Activated CD4-positive, alpha-beta T cell treated with anti-CD3 and anti-CD28 coated beads for 36 hours (primary cell): ENCODE measurements at regions of chr22 and their contacts with region 1.

Region 1: GRCh38 chr22:26672590-26673468 is 15.4 kb downstream of the MIAT start:
- DNase-seq: peak; percentile 96
- ATAC-seq: peak; percentile 71
- H3K4me3 Mint-ChIP-seq: peak overlapping the region; percentile 92
- H3K27ac Mint-ChIP-seq: peak overlapping the region; percentile 96
- H3K4me1 Mint-ChIP-seq: peaks cover 67% of the 10 kb centered on the region
- H3K27me3 Mint-ChIP-seq: no peaks in the 10 kb centered on the region

Region 2: GRCh38 chr22:25067851-25068421 is 1604.9 kb before region 1 on chr22:
- CTCF ChIA-PET with region 1: no interaction called
- POLR2A ChIA-PET with region 1: no interaction called
- intact Hi-C with region 1: loop called in 1 of 2 experiments (anchors 5 kb)
- DNase-seq: peak; percentile 90
- ATAC-seq: peak; percentile 74
- H3K4me3 Mint-ChIP-seq: peak overlapping the region; percentile 78
- H3K27ac Mint-ChIP-seq: peak overlapping the region; percentile 93
- H3K4me1 Mint-ChIP-seq: peaks cover 88% of the 10 kb centered on the region
- H3K27me3 Mint-ChIP-seq: no peaks in the 10 kb centered on the region

Region 3: DNA sequence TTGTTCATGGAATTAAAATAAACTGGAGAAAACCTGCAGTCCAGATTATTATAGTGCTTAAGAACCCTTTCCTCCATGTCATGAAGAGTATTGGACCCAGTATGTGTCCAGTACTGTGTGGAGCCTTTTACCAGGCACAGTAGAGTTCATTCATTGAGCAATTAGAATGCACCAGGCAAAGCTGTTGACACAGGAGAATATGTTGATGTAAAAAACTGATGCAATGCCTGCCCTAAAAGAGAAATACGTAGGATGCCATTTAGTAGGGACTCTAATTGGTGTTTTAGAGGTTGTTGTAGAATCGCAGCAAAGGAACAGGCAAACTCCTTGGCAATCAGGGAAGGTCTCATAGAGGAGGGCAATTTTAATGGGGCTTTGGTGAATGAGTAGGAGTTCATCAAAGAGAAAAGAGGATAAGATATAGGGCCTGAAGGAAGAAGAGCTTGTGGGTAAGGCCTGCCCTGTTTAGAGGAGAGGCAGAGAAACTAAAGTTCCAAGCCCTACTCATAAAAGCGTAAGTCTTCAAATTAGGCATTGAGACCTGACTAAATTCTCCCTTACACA is 377.2 kb before region 1 on chr22:
- CTCF ChIA-PET with region 1: no interaction called
- POLR2A ChIA-PET with region 1: no interaction called
- intact Hi-C with region 1: loop called in 1 of 2 experiments (anchors 5 kb)
- DNase-seq: no peak
- ATAC-seq: no peak
- H3K4me3 Mint-ChIP-seq: no peak overlapping the region
- H3K27ac Mint-ChIP-seq: peak overlapping the region; percentile 82
- H3K4me1 Mint-ChIP-seq: peaks cover 15% of the 10 kb centered on the region
- H3K27me3 Mint-ChIP-seq: no peaks in the 10 kb centered on the region

Region 4: GRCh38 chr22:26483439-26484359 is 189.1 kb before region 1 on chr22 and contains the starts of genes HPS4 and SRRD:
- CTCF ChIA-PET with region 1: interaction called, 5 read pairs
- POLR2A ChIA-PET with region 1: interaction called, 3 read pairs
- intact Hi-C with region 1: loop called (anchors 1 to 2 kb)
- DNase-seq: peak; percentile 95
- ATAC-seq: peak; percentile 75
- H3K4me3 Mint-ChIP-seq: peak within 1 kb of the TSS; percentile 82
- H3K27ac Mint-ChIP-seq: peak within 1 kb of the TSS; percentile 95
- H3K4me1 Mint-ChIP-seq: peaks cover 66% of the 10 kb centered on the region
- H3K27me3 Mint-ChIP-seq: no peaks in the 10 kb centered on the region
- total RNA-seq, gene HPS4: 49.3 to 60.9 TPM
- total RNA-seq, gene SRRD: 17.5 to 28.5 TPM

Region 5: DNA sequence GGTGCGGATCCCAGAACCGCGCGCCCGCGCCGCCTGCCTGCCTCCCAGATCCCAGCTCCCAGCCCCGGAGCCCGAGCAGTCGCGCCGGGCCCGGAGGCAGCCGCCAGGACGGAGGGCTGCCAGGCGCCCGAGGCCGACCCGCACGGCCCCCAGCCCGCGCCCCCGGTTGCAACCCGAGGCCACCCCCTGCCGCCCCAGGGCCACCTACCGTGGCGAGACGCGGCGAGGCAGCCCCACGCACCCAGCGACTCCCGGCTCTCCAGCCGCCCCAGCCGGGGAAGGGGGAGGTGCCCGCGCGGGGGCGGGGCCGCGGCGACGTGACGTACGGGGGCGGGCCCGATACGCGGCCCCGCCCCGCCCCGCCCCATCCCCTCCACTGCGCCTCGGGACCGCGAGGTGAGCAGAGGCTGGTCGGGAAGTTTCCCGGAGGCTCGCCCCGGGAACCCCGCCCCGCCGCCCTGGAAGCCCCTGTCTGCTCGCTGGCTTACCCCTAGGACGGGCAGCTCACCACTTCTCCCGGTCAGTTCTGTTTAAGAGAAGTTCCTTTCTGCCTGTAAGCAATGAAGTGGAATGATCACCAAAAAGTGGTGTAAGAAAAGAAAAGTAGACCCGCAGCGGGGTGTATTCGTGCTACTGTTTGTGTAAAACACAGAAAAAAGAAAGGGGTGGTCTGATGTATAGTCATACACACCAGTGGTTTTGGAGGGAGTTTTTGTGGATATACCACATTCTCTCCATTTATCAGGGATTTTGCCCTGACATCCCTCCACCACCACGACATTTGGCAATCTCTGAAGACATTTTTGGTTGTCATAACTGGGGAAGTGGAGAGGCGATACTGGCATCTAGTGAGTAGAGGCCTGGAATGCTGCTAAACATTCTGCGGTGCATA is 82.7 kb before region 1 on chr22 and contains the start of gene TPST2:
- CTCF ChIA-PET with region 1: interaction called, 3 read pairs
- POLR2A ChIA-PET with region 1: no interaction called
- intact Hi-C with region 1: loop called in 1 of 2 experiments (anchors 1 kb)
- DNase-seq: peak; percentile 87
- ATAC-seq: peak; percentile 84
- H3K4me3 Mint-ChIP-seq: peak within 1 kb of the TSS; percentile 90
- H3K27ac Mint-ChIP-seq: peak within 1 kb of the TSS; percentile 86
- H3K4me1 Mint-ChIP-seq: peaks cover 47% of the 10 kb centered on the region
- H3K27me3 Mint-ChIP-seq: no peaks in the 10 kb centered on the region
- total RNA-seq, gene TPST2: 17.4 to 18.3 TPM

Region 6: DNA sequence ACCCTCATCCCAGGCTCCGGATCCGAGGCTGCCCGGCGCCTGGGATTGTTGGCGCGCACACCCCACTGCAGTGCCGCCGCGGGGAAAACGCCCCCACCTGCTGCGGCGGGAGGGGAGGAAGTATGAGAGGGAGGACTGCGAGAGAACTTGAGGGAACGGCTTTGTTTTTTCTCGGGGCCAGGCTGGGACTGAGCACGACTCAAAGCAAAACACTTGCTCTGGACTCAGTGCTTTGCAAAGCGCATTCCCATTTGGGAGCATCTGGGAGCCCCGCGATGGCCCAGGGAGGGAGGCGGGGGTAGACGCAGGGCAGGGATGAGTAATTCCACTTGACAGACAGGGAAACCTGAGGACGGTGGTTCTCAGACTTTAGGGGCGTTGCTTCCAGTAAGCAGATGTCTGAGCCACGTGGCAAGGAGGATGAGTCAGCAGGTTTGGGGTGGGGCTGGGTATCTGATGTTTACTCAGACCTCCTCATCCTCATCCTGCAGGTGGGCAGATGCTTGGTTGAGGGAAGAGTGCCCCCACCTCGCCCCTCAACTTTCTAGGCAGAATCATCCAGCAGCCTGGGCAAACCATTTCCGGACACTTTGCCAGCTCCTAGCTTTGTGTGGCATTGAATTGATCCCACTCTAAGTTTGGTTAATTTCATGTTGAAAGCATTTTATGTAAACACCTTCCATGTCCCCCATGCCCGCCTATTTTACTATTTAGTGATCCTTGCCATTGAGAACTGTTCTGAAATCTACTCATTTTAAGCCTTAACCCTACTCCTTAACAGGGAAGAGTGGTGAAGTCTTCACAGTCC is 14.0 kb before region 1 on chr22:
- CTCF ChIA-PET with region 1: interaction called, 5 read pairs
- POLR2A ChIA-PET with region 1: interaction called, 3 read pairs
- intact Hi-C with region 1: loop called (anchors 1 kb)
- DNase-seq: peak; percentile 92
- ATAC-seq: peak; percentile 88
- H3K4me3 Mint-ChIP-seq: peak overlapping the region; percentile 81
- H3K27ac Mint-ChIP-seq: peak overlapping the region; percentile 82
- H3K4me1 Mint-ChIP-seq: peaks cover 23% of the 10 kb centered on the region
- H3K27me3 Mint-ChIP-seq: peaks cover 8% of the 10 kb centered on the region

Region 7: DNA sequence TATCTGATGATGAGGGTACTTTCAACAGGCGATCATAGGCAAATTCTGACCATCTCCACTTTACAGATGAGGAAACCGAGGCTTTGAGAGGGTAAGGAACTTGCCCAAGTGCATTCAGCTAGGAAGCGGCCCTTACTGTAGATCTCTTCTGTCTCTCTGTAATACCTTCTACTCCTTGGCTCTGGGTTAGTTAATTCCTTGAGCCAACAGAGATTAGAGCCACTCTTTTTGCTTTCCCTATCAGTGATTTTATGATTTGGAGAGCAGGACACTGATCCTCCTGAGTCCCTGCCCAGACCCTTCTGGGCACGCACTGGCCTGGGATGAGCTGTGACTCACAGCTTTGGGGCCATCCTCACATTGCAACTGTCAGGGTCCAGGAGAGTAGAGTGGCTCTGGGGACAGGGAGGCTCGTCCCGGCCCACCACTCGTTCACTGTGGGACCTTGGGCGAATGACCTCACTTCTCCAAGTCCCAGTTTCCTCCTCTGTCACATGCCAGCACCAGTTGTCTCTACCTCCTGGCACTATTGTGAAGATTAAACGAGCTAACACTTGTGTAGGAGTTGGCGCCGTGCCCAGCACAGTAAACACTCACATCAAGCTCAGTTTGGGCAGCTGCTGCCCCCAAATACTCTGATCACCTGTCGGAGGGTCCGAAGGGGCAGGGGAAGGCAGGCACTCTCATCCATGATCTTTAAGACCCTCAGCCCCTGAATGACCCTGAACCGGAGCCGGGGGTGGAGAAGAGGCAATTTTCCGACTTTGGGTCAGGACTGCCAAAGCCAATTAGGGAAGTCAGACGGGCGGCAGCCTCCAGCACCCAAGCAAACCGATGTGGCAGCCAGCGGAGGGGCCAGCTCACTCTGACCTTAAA is 219.6 kb after region 1 on chr22:
- CTCF ChIA-PET with region 1: no interaction called
- POLR2A ChIA-PET with region 1: no interaction called
- intact Hi-C with region 1: no loop called
- DNase-seq: no peak
- ATAC-seq: no peak
- H3K4me3 Mint-ChIP-seq: no peak overlapping the region
- H3K27ac Mint-ChIP-seq: no peak overlapping the region
- H3K4me1 Mint-ChIP-seq: peaks cover 14% of the 10 kb centered on the region
- H3K27me3 Mint-ChIP-seq: peaks cover 19% of the 10 kb centered on the region

Region 8: DNA sequence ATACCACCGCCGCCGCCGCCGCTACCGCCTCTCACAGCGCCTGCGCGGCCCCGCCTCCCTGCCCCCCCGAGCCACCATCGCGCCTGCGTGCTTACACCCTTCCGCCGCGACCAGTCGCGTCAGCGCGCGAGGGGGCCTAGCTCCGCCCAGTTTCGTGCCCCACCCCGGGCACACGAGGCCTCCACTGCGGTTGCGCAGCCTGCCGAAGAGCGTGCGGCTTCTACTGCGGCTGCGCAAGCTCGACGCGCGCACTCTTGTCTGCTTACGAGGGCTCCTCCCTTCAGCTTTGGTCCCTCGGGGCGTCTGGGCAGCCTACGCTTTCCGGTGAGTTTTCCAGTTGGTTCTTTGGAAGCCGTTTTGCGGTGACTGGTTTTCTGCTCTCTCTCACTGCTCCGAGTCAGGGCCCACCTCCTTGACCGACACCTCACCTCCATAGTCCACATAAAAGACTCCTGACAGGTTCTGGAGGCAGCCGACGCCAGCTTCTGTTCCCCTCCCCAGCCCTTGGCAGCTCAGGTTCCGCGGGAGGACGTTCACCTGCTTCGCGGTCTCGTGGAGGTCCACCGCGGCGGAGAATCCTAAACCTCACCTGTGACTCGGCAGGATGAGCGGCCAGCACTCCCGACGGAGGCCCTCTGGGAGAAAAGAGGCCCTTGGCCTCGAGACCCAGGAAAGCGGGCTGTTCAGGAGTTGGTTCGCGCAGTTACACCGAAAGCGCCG is 1246.6 kb after region 1 on chr22 and contains the start of gene PITPNB:
- CTCF ChIA-PET with region 1: no interaction called
- POLR2A ChIA-PET with region 1: no interaction called
- intact Hi-C with region 1: loop called in 1 of 2 experiments (anchors 1 kb)
- DNase-seq: peak; percentile 99
- ATAC-seq: peak; percentile 93
- H3K4me3 Mint-ChIP-seq: peak within 1 kb of the TSS; percentile 97
- H3K27ac Mint-ChIP-seq: peak within 1 kb of the TSS; percentile 98
- H3K4me1 Mint-ChIP-seq: peaks cover 56% of the 10 kb centered on the region
- H3K27me3 Mint-ChIP-seq: no peaks in the 10 kb centered on the region
- total RNA-seq, gene PITPNB: 96.5 to 111 TPM